Astrocyte of the cerebellum (primary cell): ENCODE measurements at regions of chr10 and their contacts with region 1.

Region 1: GRCh38 chr10:8146650-8147049 is 92.2 kb downstream of the GATA3 start:
- DNase-seq: no peak
- H3K4me3 ChIP-seq: no peak overlapping the region
- CTCF ChIP-seq: no peak

Region 2: GRCh38 chr10:8100376-8100775 is 46.3 kb before region 1 on chr10:
- in situ Hi-C with region 1: no loop called
- DNase-seq: no peak
- H3K4me3 ChIP-seq: no peak overlapping the region
- CTCF ChIP-seq: no peak

Region 3: DNA sequence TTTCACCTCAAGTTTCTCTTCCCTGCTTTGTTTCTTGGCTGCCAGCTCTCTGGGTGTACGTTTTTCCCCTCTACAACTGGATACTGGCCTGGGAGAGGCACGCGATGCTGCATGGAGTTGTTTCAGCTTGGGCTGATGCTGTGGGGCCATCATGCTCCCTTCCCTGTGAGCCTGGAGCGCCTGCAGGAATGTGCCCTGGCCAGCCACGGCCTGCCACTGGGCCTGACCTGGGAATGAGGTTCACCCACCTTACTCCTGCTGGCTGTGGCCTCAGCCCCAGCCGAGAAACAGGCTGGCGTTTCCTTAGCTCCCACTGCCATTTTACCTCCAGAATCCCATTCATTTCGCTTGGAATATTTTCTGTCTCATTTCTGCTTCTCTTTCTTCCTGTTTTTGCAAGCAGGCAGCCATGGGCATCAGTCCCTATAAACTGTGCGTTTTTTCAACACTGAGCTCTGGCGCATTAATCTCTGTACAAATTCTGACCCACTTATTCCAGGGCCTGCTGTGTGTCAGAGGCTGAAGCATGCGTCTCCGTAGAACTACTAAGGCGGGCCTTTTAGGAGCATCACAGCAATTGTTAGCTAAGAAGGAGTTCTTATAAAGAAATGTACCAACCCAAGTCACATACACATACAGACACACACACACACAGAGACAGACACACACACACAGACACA is 34.3 kb before region 1 on chr10:
- in situ Hi-C with region 1: no loop called
- DNase-seq: no peak
- H3K4me3 ChIP-seq: no peak overlapping the region
- CTCF ChIP-seq: no peak

Region 4: GRCh38 chr10:8245131-8245813 is 98.6 kb after region 1 on chr10:
- in situ Hi-C with region 1: loop called (anchors 5 kb)
- DNase-seq: no peak
- H3K4me3 ChIP-seq: no peak overlapping the region
- CTCF ChIP-seq: no peak